ENCODE measurements at regions of chr17 and their contacts with region 1.

Region 1: DNA sequence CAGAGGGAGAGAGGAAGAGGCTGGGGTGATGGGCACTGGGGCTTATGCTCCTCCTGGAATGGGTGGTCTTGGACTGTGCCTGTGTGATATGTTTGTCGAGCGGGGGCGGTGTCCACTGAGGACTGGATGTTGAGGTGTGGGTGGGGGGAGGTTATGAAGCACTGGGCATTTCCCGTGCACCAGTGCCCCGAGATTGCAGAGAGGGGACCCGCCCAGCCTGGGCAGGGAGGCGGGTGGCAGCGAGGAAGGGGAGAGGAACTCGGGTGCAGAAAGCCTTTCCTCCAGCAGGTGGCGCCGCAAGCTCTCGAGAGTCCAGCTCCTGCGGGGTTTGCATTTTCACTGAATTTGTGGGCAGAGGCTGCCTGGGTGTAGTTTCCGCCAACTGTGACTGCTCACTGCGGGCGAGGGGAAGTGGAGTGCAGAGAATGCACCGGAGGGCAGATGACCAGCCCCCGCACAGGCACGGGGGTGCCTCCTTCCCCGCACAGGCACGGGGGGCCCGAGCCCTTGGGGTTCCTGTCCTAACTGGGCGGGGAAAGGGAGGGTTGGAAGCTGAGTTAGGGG is 190.6 kb downstream of the SEC14L1 start:
- DNase-seq: peak; percentile 92
- H3K4me3 ChIP-seq: peak overlapping the region; percentile 30
- H3K27ac ChIP-seq: no peak overlapping the region
- H3K4me1 ChIP-seq: peaks cover 8% of the 10 kb centered on the region
- H3K27me3 ChIP-seq: no peaks in the 10 kb centered on the region
- CTCF ChIP-seq: peak; percentile 97

Region 2: GRCh38 chr17:76848670-76849069 is 482.7 kb before region 1 on chr17:
- CTCF ChIA-PET with region 1: no interaction called
- POLR2A ChIA-PET with region 1: no interaction called
- intact Hi-C with region 1: no loop called
- DNase-seq: no peak
- H3K4me3 ChIP-seq: no peak overlapping the region
- H3K27ac ChIP-seq: no peak overlapping the region
- H3K4me1 ChIP-seq: peaks cover 16% of the 10 kb centered on the region
- H3K27me3 ChIP-seq: no peaks in the 10 kb centered on the region
- CTCF ChIP-seq: no peak

Region 3: DNA sequence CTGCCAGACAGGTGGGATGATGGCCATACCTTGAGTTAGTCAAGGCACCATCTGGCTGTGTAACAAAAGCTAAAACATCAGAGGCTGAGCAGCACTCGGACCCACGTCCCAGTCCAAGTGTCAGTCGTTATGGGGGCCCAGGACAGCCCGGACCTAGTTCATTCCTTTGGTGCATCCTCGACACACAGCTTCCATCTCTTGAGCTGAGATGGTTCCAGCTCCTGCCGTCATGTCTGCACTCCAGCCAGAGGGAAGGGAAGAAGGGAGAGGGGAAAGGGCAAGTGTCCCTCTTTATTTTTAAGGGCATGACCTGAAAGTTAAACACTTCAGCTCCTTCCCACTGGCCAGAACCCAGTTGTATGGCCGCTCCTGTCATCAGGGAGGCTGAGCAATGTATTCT is 27.4 kb after region 1 on chr17:
- CTCF ChIA-PET with region 1: no interaction called
- POLR2A ChIA-PET with region 1: no interaction called
- intact Hi-C with region 1: no loop called
- DNase-seq: no peak
- H3K4me3 ChIP-seq: no peak overlapping the region
- H3K27ac ChIP-seq: no peak overlapping the region
- H3K4me1 ChIP-seq: peaks cover 22% of the 10 kb centered on the region
- H3K27me3 ChIP-seq: no peaks in the 10 kb centered on the region
- CTCF ChIP-seq: no peak

Region 4: GRCh38 chr17:77372444-77373298 is 41.3 kb after region 1 on chr17:
- CTCF ChIA-PET with region 1: no interaction called
- POLR2A ChIA-PET with region 1: interaction called, 3 read pairs
- intact Hi-C with region 1: loop called (anchors 5 kb)
- DNase-seq: peak; percentile 91
- H3K4me3 ChIP-seq: peak overlapping the region; percentile 95
- H3K27ac ChIP-seq: peak overlapping the region; percentile 95
- H3K4me1 ChIP-seq: peaks cover 54% of the 10 kb centered on the region
- H3K27me3 ChIP-seq: no peaks in the 10 kb centered on the region
- CTCF ChIP-seq: no peak

Region 5: GRCh38 chr17:77385750-77386501 is 54.5 kb after region 1 on chr17:
- CTCF ChIA-PET with region 1: no interaction called
- POLR2A ChIA-PET with region 1: no interaction called
- intact Hi-C with region 1: loop called (anchors 5 kb)
- DNase-seq: no peak
- H3K4me3 ChIP-seq: no peak overlapping the region
- H3K27ac ChIP-seq: no peak overlapping the region
- H3K4me1 ChIP-seq: peaks cover 30% of the 10 kb centered on the region
- H3K27me3 ChIP-seq: no peaks in the 10 kb centered on the region
- CTCF ChIP-seq: no peak

Region 6: GRCh38 chr17:77429919-77430752 is 98.8 kb after region 1 on chr17:
- CTCF ChIA-PET with region 1: no interaction called
- POLR2A ChIA-PET with region 1: no interaction called
- intact Hi-C with region 1: loop called (anchors 10 kb)
- DNase-seq: peak; percentile 86
- H3K4me3 ChIP-seq: no peak overlapping the region
- H3K27ac ChIP-seq: no peak overlapping the region
- H3K4me1 ChIP-seq: peaks cover 60% of the 10 kb centered on the region
- H3K27me3 ChIP-seq: no peaks in the 10 kb centered on the region
- CTCF ChIP-seq: peak; percentile 82

Region 7: DNA sequence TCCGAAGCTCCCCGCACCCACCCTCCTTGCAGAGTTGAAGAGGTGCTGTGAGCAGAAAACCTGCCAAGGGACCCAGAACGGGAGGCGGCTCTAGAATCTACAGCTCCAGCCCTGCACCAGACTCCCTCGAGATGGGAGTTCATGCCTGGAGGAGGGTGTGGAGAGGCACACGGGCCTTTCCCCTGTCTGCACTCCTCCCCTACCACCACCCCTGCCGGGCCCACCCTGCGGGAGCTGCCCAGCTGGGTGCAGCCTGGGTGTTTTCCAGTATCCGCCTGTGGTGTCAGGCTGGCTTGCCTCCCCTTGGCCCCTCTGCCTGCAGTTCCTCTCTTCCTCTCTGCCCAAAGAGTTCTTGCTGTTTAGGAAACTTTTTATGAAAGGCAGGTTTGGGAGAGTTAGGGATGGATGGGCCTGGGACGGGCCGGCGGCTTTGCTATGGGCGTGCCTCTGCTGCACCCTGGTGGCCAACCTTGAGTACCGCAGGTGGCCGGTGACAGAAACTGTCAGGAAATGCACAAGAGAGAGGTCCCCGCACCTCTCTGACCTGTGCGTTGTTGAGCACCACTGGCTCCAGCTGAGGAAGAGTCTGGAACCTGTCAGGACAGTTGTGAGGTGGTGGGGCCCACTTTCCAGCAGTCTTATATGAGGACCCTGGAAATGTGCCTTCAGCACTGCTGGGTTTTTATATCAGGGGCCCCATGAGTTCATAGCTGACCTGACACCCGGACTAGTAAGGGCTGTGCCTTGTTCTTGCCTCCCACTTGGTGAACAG is 163.5 kb after region 1 on chr17:
- CTCF ChIA-PET with region 1: interaction called, 8 read pairs
- POLR2A ChIA-PET with region 1: no interaction called
- intact Hi-C with region 1: loop called (anchors 1 kb)
- DNase-seq: peak; percentile 84
- H3K4me3 ChIP-seq: no peak overlapping the region
- H3K27ac ChIP-seq: no peak overlapping the region
- H3K4me1 ChIP-seq: peaks cover 5% of the 10 kb centered on the region
- H3K27me3 ChIP-seq: no peaks in the 10 kb centered on the region
- CTCF ChIP-seq: peak; percentile 98

Region 8: GRCh38 chr17:77681861-77682260 is 350.5 kb after region 1 on chr17:
- CTCF ChIA-PET with region 1: no interaction called
- POLR2A ChIA-PET with region 1: no interaction called
- intact Hi-C with region 1: no loop called
- DNase-seq: no peak
- H3K4me3 ChIP-seq: no peak overlapping the region
- H3K27ac ChIP-seq: no peak overlapping the region
- H3K4me1 ChIP-seq: peaks cover 8% of the 10 kb centered on the region
- H3K27me3 ChIP-seq: no peaks in the 10 kb centered on the region
- CTCF ChIP-seq: no peak